CD4-positive, alpha-beta T cell (primary cell): ENCODE measurements at regions of chr6 and their contacts with region 1.

Region 1: DNA sequence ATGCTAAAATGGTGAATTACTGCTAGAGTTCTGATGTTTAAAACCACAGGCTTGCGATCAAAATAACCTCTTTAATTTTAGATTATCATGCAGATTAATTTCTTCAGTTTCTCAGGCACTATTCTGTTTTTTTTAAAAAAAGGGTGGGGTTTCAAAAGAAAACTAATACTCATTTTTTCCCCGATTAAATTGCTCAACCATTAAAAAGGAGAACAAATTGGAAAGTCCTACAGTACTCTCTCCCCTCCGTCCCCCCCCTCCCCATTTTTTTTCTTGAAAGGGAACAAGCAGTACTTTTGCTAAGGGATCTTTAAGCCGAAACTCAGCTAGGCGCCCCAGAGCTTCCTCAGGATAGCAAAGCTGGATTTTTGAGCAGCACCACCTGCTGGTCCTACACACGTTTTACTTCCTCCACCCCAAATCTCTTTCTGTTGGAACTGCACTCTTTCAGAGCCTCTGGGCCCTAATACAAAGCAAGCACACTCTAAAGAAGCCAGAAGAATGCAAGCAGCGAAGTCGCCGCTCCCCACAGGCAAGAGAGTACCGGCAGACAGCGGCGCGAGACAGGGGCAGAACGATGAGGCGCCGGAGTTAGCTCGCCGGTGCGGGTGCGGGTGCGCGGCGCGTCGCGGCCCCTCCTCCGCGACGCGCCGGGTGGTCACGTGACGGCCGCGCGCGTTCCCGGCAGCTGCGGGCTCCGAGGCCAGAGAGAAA is at the start of gene RNF146:
- DNase-seq: peak; percentile 35 to 87 (median 66)
- ATAC-seq: peak; percentile 74
- H3K4me3 ChIP-seq: peak within 1 kb of the TSS; percentile 79
- H3K4me3 Mint-ChIP-seq: peak within 1 kb of the TSS; percentile 100
- H3K27ac ChIP-seq: peak within 1 kb of the TSS; percentile 87 to 89
- H3K27ac Mint-ChIP-seq: peak within 1 kb of the TSS; percentile 96
- H3K4me1 ChIP-seq: no peaks in the 10 kb centered on the region
- H3K4me1 Mint-ChIP-seq: peaks cover 50% of the 10 kb centered on the region
- H3K27me3 ChIP-seq: no peaks in the 10 kb centered on the region
- H3K27me3 Mint-ChIP-seq: no peaks in the 10 kb centered on the region
- CTCF ChIP-seq: peak; percentile 71
- total RNA-seq, gene RNF146: 12.5 to 14.1 TPM

Region 2: GRCh38 chr6:125986300-125987025 is 1279.9 kb before region 1 on chr6 and contains the start of gene TRMT11:
- CTCF ChIA-PET with region 1: no interaction called
- POLR2A ChIA-PET with region 1: interaction called, 4 read pairs
- intact Hi-C with region 1: loop called in 1 of 2 experiments (anchors 10 kb)
- DNase-seq: peak; percentile 63 to 92 (median 76)
- ATAC-seq: peak; percentile 95
- H3K4me3 ChIP-seq: peak within 1 kb of the TSS; percentile 89
- H3K4me3 Mint-ChIP-seq: peak within 1 kb of the TSS; percentile 52
- H3K27ac ChIP-seq: peak within 1 kb of the TSS; percentile 54 to 88
- H3K27ac Mint-ChIP-seq: no peak within 1 kb of the TSS
- H3K4me1 ChIP-seq: peaks cover 13% of the 10 kb centered on the region
- H3K4me1 Mint-ChIP-seq: no peaks in the 10 kb centered on the region
- H3K27me3 ChIP-seq: no peaks in the 10 kb centered on the region
- H3K27me3 Mint-ChIP-seq: no peaks in the 10 kb centered on the region
- CTCF ChIP-seq: no peak
- total RNA-seq, gene TRMT11: 21.6 to 22.5 TPM

Region 3: DNA sequence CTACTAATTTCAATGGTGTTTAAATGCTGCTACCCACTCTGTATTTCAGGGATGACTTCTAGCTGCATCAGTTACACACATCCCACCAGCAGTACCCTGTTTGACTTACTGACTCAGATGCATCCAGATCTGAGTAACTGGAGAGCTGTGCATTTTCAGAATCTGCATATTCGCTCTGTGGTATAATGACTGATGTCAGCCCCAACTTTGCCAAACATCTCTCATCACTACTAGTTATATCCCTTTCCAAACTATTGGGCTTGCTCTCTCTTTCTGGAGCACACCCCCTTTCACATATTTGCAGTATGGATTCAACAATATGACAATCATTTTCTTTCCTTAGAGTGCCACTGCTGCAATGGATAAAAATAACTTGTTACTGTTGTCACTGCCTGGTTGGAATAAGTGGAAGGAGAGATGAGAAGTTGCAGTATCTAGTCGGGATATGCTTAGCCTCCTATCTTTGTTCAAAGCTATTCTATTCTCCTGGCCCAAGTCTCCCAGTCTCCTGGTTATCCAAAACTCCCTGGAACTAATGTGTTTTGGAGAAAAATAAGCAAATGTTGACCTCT is 151.2 kb before region 1 on chr6:
- CTCF ChIA-PET with region 1: no interaction called
- POLR2A ChIA-PET with region 1: no interaction called
- intact Hi-C with region 1: no loop called
- DNase-seq: no peak
- ATAC-seq: no peak
- H3K4me3 ChIP-seq: no peak overlapping the region
- H3K4me3 Mint-ChIP-seq: no peak overlapping the region
- H3K27ac ChIP-seq: no peak overlapping the region
- H3K27ac Mint-ChIP-seq: no peak overlapping the region
- H3K4me1 ChIP-seq: peaks cover 18% of the 10 kb centered on the region
- H3K4me1 Mint-ChIP-seq: peaks cover 20% of the 10 kb centered on the region
- H3K27me3 ChIP-seq: peaks cover 24 to 33% of the 10 kb centered on the region in 2 experiments
- H3K27me3 Mint-ChIP-seq: peaks cover 73% of the 10 kb centered on the region
- CTCF ChIP-seq: no peak

Region 4: GRCh38 chr6:127195833-127196232 is 70.5 kb before region 1 on chr6:
- CTCF ChIA-PET with region 1: no interaction called
- POLR2A ChIA-PET with region 1: interaction called, 3 read pairs
- intact Hi-C with region 1: loop called in 1 of 2 experiments (anchors 2 kb)
- DNase-seq: no peak
- ATAC-seq: no peak
- H3K4me3 ChIP-seq: no peak overlapping the region
- H3K4me3 Mint-ChIP-seq: no peak overlapping the region
- H3K27ac ChIP-seq: no peak overlapping the region
- H3K27ac Mint-ChIP-seq: no peak overlapping the region
- H3K4me1 ChIP-seq: no peaks in the 10 kb centered on the region
- H3K4me1 Mint-ChIP-seq: no peaks in the 10 kb centered on the region
- H3K27me3 ChIP-seq: no peaks in the 10 kb centered on the region
- H3K27me3 Mint-ChIP-seq: peaks cover 11% of the 10 kb centered on the region
- CTCF ChIP-seq: no peak

Region 5: GRCh38 chr6:127207591-127208120 is 58.7 kb before region 1 on chr6:
- CTCF ChIA-PET with region 1: no interaction called
- POLR2A ChIA-PET with region 1: no interaction called
- intact Hi-C with region 1: no loop called
- DNase-seq: no peak
- ATAC-seq: no peak
- H3K4me3 ChIP-seq: no peak overlapping the region
- H3K4me3 Mint-ChIP-seq: no peak overlapping the region
- H3K27ac ChIP-seq: no peak overlapping the region
- H3K27ac Mint-ChIP-seq: no peak overlapping the region
- H3K4me1 ChIP-seq: no peaks in the 10 kb centered on the region
- H3K4me1 Mint-ChIP-seq: no peaks in the 10 kb centered on the region
- H3K27me3 ChIP-seq: peaks cover 8 to 34% of the 10 kb centered on the region in 2 experiments
- H3K27me3 Mint-ChIP-seq: peaks cover 50% of the 10 kb centered on the region
- CTCF ChIP-seq: no peak

Region 6: GRCh38 chr6:127291495-127291894 is 25.2 kb after region 1 on chr6:
- CTCF ChIA-PET with region 1: interaction called, 14 read pairs
- POLR2A ChIA-PET with region 1: interaction called, 12 read pairs
- intact Hi-C with region 1: no loop called
- DNase-seq: peak in 1 of 14 experiments; percentile 24
- ATAC-seq: no peak
- H3K4me3 ChIP-seq: peak overlapping the region; percentile 17
- H3K4me3 Mint-ChIP-seq: peak overlapping the region; percentile 76
- H3K27ac ChIP-seq: no peak overlapping the region
- H3K27ac Mint-ChIP-seq: peak overlapping the region; percentile 38
- H3K4me1 ChIP-seq: no peaks in the 10 kb centered on the region
- H3K4me1 Mint-ChIP-seq: peaks cover 42% of the 10 kb centered on the region
- H3K27me3 ChIP-seq: no peaks in the 10 kb centered on the region
- H3K27me3 Mint-ChIP-seq: no peaks in the 10 kb centered on the region
- CTCF ChIP-seq: no peak

Region 7: GRCh38 chr6:127516666-127517273 is 250.4 kb after region 1 on chr6:
- CTCF ChIA-PET with region 1: interaction called, 15 read pairs
- POLR2A ChIA-PET with region 1: interaction called, 13 read pairs
- intact Hi-C with region 1: no loop called
- DNase-seq: peak in 11 of 14 experiments; percentile 6 to 70 (median 31)
- ATAC-seq: peak; percentile 37
- H3K4me3 ChIP-seq: peak overlapping the region; percentile 80
- H3K4me3 Mint-ChIP-seq: peak overlapping the region; percentile 87
- H3K27ac ChIP-seq: no peak overlapping the region
- H3K27ac Mint-ChIP-seq: peak overlapping the region; percentile 57
- H3K4me1 ChIP-seq: peaks cover 37% of the 10 kb centered on the region
- H3K4me1 Mint-ChIP-seq: peaks cover 38% of the 10 kb centered on the region
- H3K27me3 ChIP-seq: peaks cover 14 to 35% of the 10 kb centered on the region in 2 experiments
- H3K27me3 Mint-ChIP-seq: peaks cover 42% of the 10 kb centered on the region
- CTCF ChIP-seq: peak; percentile 65